ENCODE measurements at regions of chr6 and their contacts with region 1.

Region 1: DNA sequence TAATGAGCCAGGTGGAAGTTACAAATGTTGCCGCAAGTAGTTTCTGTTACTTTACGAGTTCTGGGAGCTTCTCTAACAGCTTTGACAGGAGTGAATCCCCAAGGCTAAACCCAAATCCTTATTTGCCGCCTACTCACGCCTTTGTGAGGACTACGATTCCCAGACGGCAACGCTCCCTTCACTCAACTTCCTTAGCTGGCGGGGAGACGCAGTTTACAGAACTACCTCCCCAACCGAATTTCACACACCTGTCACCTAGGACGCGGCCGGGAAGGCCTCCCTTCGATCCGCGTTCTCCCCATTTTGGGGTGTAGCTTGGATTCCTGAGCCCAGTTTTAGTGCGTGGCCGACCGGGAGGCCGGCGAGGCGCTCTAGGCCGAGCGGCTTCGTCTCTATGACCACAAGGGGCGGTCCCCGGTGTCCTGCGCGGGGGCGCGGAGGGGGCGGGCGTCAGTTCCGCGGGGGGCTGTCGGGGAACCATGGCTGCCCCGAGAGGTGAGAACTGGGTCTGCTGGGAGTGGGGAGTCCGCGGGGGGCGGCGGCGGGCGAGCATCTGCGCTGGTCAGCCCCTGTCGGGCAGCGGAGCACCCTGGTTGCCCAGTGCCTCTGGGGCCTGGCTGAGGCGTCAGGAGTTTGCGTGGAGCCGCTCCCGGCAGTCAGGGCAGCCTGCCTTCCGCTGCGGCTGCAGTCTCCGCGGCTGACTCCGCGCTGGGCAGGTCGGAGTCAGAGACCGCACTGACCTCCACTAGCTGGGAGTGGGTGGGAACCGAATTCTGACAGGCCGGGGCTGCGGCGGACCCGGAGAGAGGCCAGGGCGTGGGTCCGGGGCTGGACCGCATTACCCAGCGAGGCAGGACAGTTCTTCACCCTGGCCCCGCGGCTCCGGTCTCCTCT is at the start of gene SLC35A1:
- DNase-seq: peak; percentile 92
- ATAC-seq: peak; percentile 90
- H3K4me3 Mint-ChIP-seq: peak within 1 kb of the TSS; percentile 88
- H3K27ac Mint-ChIP-seq: peak within 1 kb of the TSS; percentile 93
- H3K4me1 Mint-ChIP-seq: peaks cover 18% of the 10 kb centered on the region
- H3K27me3 Mint-ChIP-seq: peaks cover 3% of the 10 kb centered on the region
- total RNA-seq, gene SLC35A1: 6.5 to 9.9 TPM

Region 2: DNA sequence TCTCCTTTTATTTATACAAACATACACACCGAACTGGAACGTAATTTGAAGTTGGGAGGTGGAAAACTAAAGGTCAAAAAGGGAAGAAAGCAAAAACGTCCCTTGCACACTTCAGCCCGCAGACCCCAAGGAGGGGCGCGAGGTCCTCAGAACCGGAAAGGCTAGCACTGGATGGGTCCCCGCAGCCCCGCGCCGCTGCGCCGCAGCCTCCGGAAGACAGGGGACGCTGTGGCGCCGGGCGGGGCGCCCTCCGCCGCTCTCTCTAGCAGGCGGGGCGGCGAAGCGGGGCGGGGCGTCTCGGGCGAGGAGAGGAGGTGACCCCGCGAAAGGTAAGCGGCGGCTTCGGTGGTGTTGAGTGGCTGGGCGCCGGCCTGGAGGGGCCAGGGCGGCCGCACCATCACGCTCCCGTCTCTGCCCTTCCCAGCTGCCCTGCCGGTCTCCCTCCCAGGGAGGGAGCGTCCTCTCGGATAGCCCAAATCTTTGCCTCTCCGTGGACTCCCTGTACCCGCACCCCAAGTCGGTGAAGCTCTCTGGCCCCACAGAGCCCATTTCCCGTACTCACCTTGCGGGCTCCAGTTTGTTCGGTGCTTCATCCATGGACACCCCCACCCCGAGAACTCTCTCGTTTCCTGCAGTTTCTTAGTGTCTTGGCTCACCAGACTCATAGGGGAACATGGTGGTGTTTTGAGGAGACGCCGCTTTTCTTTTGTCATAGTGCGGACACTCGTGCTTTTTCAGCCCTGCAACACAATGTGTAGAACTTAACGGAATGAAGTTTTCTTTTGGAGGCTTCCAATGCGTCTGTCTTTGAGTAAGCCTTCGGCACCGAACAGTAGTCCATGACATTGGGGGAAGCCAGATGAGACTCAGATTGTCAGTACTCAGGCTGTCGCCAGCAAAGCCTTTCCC is 150.2 kb before region 1 on chr6 and contains the start of gene SMIM8:
- CTCF ChIA-PET with region 1: interaction called, 6 read pairs
- POLR2A ChIA-PET with region 1: no interaction called
- intact Hi-C with region 1: loop called (anchors 1 kb)
- DNase-seq: peak; percentile 94
- ATAC-seq: peak; percentile 100
- H3K4me3 Mint-ChIP-seq: peak within 1 kb of the TSS; percentile 92
- H3K27ac Mint-ChIP-seq: peak within 1 kb of the TSS; percentile 94
- H3K4me1 Mint-ChIP-seq: peaks cover 16% of the 10 kb centered on the region
- H3K27me3 Mint-ChIP-seq: no peaks in the 10 kb centered on the region
- total RNA-seq, gene SMIM8: 8.5 to 10.1 TPM

Region 3: DNA sequence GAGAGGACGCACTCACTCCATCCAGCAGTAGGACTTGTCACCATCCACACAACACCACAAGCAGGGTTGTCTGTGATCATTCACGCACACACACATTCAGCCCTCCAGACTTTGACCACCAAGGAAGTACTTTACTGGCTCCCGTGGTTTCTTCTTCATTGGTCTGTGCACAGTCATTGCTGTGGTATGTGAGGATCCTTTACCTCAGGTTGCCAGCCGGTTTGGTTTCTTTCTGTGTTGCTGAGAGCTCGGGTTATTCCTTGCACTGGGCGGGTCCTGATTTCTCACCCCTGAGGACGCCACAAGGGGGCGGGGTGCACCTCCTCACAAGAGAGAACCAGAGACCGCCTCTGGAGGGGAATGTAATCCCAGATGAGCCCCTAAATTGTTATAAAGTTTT is 11.2 kb after region 1 on chr6:
- CTCF ChIA-PET with region 1: no interaction called
- POLR2A ChIA-PET with region 1: no interaction called
- intact Hi-C with region 1: no loop called
- DNase-seq: peak; percentile 41
- ATAC-seq: peak; percentile 36
- H3K4me3 Mint-ChIP-seq: no peak overlapping the region
- H3K27ac Mint-ChIP-seq: no peak overlapping the region
- H3K4me1 Mint-ChIP-seq: no peaks in the 10 kb centered on the region
- H3K27me3 Mint-ChIP-seq: no peaks in the 10 kb centered on the region

Region 4: GRCh38 chr6:87540539-87540938 is 67.8 kb after region 1 on chr6:
- CTCF ChIA-PET with region 1: no interaction called
- POLR2A ChIA-PET with region 1: no interaction called
- intact Hi-C with region 1: no loop called
- DNase-seq: no peak
- ATAC-seq: no peak
- H3K4me3 Mint-ChIP-seq: no peak overlapping the region
- H3K27ac Mint-ChIP-seq: no peak overlapping the region
- H3K4me1 Mint-ChIP-seq: peaks cover 3% of the 10 kb centered on the region
- H3K27me3 Mint-ChIP-seq: no peaks in the 10 kb centered on the region

Measured in activated CD4-positive, alpha-beta T cell treated with anti-CD3 and anti-CD28 coated beads for 36 hours (primary cell).